ENCODE measurements at regions of chr20 and their contacts with region 1.

Region 1: GRCh38 chr20:49338061-49338460 is 60.2 kb upstream of the ZNFX1 start:
- DNase-seq: no peak
- H3K4me3 Mint-ChIP-seq: no peak overlapping the region
- H3K27ac Mint-ChIP-seq: no peak overlapping the region
- H3K4me1 Mint-ChIP-seq: no peaks in the 10 kb centered on the region
- H3K27me3 Mint-ChIP-seq: peaks cover 25% of the 10 kb centered on the region

Region 2: GRCh38 chr20:49140834-49141233 is 197.2 kb before region 1 on chr20:
- CTCF ChIA-PET with region 1: no interaction called
- DNase-seq: no peak
- H3K4me3 Mint-ChIP-seq: no peak overlapping the region
- H3K27ac Mint-ChIP-seq: no peak overlapping the region
- H3K4me1 Mint-ChIP-seq: peaks cover 10% of the 10 kb centered on the region
- H3K27me3 Mint-ChIP-seq: no peaks in the 10 kb centered on the region

Region 3: GRCh38 chr20:49216991-49217578 is 121.0 kb before region 1 on chr20:
- CTCF ChIA-PET with region 1: no interaction called
- DNase-seq: peak; percentile 95
- H3K4me3 Mint-ChIP-seq: no peak overlapping the region
- H3K27ac Mint-ChIP-seq: peak overlapping the region; percentile 12
- H3K4me1 Mint-ChIP-seq: peaks cover 27% of the 10 kb centered on the region
- H3K27me3 Mint-ChIP-seq: peaks cover 15% of the 10 kb centered on the region

Region 4: DNA sequence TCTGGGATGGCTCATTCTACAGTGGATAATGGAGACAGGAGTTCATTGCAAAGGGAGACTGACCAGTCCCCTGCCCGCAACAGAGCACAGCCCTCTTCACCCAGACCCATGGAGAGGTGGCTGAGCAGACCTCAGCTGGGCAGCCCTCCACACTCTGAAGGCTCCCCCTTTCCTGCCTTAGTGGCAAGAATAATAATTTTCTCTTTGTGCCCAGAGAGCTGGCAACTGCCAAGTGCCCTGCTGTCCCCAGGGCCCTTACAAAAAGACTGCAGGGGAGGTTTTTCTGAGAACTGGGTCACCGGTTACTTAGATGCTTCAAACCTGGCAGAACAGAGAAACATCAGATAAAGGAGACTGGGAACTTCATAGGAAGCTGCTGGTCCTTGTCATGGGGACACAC is 24.8 kb before region 1 on chr20:
- CTCF ChIA-PET with region 1: no interaction called
- DNase-seq: no peak
- H3K4me3 Mint-ChIP-seq: no peak overlapping the region
- H3K27ac Mint-ChIP-seq: no peak overlapping the region
- H3K4me1 Mint-ChIP-seq: peaks cover 2% of the 10 kb centered on the region
- H3K27me3 Mint-ChIP-seq: peaks cover 79% of the 10 kb centered on the region

Region 5: DNA sequence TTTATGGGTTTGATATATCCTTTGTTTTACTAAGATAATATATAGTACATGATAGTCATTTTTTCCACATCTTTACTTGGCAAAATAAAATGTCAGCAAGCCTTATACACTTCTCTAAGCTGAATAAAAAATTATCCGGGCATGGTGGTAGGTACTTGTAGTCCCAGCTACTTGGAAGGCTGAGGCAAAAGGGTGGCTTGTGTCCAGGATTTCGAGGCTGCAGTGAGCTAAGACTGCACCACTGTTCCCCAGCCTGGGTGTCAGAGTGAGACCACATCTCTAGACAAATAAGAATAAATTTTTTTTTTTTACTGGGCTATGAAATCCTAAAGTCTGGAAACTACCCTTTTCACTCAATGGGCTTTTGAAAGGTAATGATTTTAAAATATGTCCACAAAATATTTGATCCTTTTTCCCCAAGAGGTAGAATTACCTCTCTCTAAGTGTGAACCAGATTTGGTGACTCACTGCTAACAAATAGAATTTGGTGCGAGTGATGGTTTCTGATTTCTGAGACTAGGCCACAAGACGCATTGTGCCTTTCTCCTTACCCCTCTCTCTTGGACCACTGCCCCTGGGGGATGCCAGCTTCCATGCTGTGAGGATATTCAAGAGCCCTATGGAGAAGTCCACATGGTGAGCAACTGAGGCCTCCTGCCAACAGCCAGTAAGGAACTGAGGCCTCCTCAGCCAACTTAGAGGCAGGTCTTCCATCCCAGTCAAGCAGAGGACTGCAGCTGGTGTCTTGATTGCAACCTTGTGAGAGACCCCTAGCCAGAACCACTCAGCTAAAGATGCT is 24.0 kb after region 1 on chr20:
- CTCF ChIA-PET with region 1: no interaction called
- DNase-seq: no peak
- H3K4me3 Mint-ChIP-seq: no peak overlapping the region
- H3K27ac Mint-ChIP-seq: no peak overlapping the region
- H3K4me1 Mint-ChIP-seq: no peaks in the 10 kb centered on the region
- H3K27me3 Mint-ChIP-seq: peaks cover 50% of the 10 kb centered on the region

Region 6: GRCh38 chr20:49484180-49485140 is 146.4 kb after region 1 on chr20:
- CTCF ChIA-PET with region 1: interaction called, 17 read pairs
- DNase-seq: peak; percentile 77
- H3K4me3 Mint-ChIP-seq: peak overlapping the region; percentile 70
- H3K27ac Mint-ChIP-seq: no peak overlapping the region
- H3K4me1 Mint-ChIP-seq: peaks cover 11% of the 10 kb centered on the region
- H3K27me3 Mint-ChIP-seq: peaks cover 87% of the 10 kb centered on the region

Region 7: DNA sequence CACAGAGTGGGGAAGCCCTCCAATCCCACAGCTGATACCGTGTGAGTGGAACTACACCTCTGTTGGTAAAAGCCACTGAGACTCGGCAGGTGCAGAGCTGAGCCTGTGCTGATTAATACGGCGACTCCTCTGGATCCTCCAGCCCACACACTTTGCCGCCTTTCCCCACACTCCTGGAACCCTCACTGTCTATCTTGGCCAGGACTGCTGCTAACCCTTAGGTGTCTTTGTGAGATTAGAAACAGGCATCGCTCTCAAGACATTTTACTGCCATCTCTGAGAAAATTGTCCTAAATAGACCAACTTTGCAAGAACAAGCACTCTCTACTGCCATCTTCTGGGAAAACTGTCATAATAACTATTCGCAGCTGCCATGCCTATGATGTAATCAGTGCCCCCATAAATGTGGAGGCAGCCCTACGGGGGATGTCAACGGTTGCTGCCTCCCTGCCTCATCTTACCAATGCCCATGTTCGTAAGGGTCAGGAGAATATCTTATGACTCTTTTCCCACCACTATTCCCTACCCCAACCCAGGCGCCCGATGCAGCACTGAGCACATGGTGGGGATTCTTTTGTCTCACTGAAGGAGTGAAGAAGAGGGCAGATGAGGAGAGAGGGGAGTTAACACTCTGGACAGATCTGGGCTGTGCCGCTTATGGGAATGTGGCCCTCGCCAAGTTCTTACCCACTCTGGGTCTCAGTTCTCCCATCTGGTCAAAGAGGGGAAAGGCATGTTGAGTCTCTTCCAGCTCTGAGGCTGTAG is 170.6 kb after region 1 on chr20:
- CTCF ChIA-PET with region 1: interaction called, 23 read pairs
- DNase-seq: no peak
- H3K4me3 Mint-ChIP-seq: no peak overlapping the region
- H3K27ac Mint-ChIP-seq: no peak overlapping the region
- H3K4me1 Mint-ChIP-seq: no peaks in the 10 kb centered on the region
- H3K27me3 Mint-ChIP-seq: peaks cover 67% of the 10 kb centered on the region

Region 8: DNA sequence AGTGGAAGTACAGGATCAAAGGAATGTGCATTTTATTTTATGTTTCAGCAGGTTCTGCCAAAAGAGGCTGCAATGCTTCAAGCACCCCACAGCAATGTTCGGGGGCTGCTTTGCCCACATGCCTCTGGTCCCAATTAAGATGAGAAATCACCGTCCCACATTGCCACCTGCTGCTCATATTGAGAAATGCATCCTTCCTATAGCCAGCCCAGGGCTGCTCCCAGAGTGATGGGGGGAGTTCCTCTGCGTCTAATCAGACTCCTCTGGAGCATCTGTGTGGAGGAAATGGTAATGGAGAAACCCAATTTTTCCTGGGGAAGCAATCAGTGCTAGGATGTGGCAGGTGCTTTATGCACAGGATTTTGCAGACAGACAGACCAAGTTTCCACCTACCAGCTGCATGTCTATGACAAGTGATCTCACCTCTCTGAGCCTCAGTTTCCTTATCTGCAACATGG is 196.2 kb after region 1 on chr20:
- CTCF ChIA-PET with region 1: interaction called, 47 read pairs
- DNase-seq: peak; percentile 76
- H3K4me3 Mint-ChIP-seq: no peak overlapping the region
- H3K27ac Mint-ChIP-seq: peak overlapping the region; percentile 31
- H3K4me1 Mint-ChIP-seq: peaks cover 20% of the 10 kb centered on the region
- H3K27me3 Mint-ChIP-seq: peaks cover 67% of the 10 kb centered on the region